ENCODE measurements at regions of chr2 and their contacts with region 1.

Region 1: DNA sequence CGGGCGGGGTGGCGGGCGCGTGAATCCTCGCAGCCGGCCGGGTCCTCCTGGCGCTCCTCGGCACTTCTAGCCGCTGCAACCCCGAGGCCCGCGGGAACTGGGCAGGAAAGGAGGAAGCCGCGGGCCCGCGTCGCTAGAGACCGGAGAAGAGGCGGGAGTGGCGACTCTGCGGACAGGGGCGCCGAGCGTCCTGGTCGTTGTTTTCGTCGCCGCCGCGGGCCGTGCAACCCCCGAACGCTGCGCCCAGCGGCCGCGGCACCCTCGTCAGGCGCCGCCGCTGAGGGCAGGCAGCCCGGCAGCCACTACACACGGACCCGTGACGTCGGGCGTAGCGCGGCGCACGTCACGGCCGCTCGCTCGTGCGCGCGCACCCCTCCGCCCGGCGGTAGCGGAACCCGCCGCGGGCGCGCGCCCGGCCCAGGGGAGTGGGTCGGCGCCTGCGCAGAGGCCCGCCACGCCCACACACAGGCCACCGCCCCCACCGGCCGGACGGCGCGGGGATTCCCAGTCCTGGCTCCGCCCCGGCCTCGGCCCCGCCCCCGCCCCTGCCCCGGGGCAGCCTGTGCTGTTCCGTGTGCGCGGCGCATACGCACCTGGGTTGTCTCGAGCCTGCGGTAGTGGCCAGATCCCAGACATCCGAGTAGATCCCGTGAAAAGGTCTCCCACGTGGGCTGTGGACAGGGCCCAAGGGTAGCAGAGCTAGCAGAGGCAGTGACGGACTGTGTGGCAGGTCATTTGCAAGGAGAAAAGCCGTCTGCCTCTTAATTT is at the start of gene MAP3K2:
- DNase-seq: peak; percentile 85 to 100 (median 94)
- ATAC-seq: peak; percentile 78
- H3K4me3 Mint-ChIP-seq: peak within 1 kb of the TSS; percentile 86 to 95 (median 91)
- H3K27ac Mint-ChIP-seq: peak within 1 kb of the TSS; percentile 98 to 100 (median 99)
- H3K4me1 Mint-ChIP-seq: peaks cover 38 to 77% (median 65%) of the 10 kb centered on the region in 4 donors
- H3K27me3 Mint-ChIP-seq: no peaks in the 10 kb centered on the region
- polyA plus RNA-seq, gene MAP3K2: 36.0 to 51.9 (median 40.8) TPM

Region 2: GRCh38 chr2:127415593-127416505 is 28.0 kb after region 1 on chr2:
- POLR2A ChIA-PET with region 1: interaction called, 13 read pairs
- DNase-seq: peak; percentile 75 to 86 (median 79)
- ATAC-seq: peak; percentile 92
- H3K4me3 Mint-ChIP-seq: peak overlapping the region; percentile 79 to 89 (median 84)
- H3K27ac Mint-ChIP-seq: peak overlapping the region in 9 of 10 donors; percentile 36 to 89 (median 74)
- H3K4me1 Mint-ChIP-seq: peaks cover 11 to 53% (median 18%) of the 10 kb centered on the region in 4 donors
- H3K27me3 Mint-ChIP-seq: peaks cover 0 to 10% (median 5%) of the 10 kb centered on the region in 5 donors

Region 3: GRCh38 chr2:127471286-127471988 is 83.6 kb after region 1 on chr2:
- POLR2A ChIA-PET with region 1: no interaction called
- DNase-seq: no peak
- ATAC-seq: no peak
- H3K4me3 Mint-ChIP-seq: no peak overlapping the region
- H3K27ac Mint-ChIP-seq: peak overlapping the region in 1 of 10 donors; percentile 34
- H3K4me1 Mint-ChIP-seq: peaks cover 0 to 8% (median under 1%) of the 10 kb centered on the region in 4 donors
- H3K27me3 Mint-ChIP-seq: no peaks in the 10 kb centered on the region

Region 4: GRCh38 chr2:129061069-129061768 is 1673.4 kb after region 1 on chr2:
- POLR2A ChIA-PET with region 1: no interaction called
- DNase-seq: no peak
- ATAC-seq: no peak
- H3K4me3 Mint-ChIP-seq: no peak overlapping the region
- H3K27ac Mint-ChIP-seq: no peak overlapping the region
- H3K4me1 Mint-ChIP-seq: no peaks in the 10 kb centered on the region
- H3K27me3 Mint-ChIP-seq: peaks cover 0 to 4% (median 0%) of the 10 kb centered on the region in 5 donors

Measured in naive thymus-derived CD8-positive, alpha-beta T cell (primary cell).